Activated CD4-positive, alpha-beta memory T cell treated with anti-CD3 and anti-CD28 coated beads for 36 hours (primary cell): ENCODE measurements at regions of chr3 and their contacts with region 1.

Region 1: DNA sequence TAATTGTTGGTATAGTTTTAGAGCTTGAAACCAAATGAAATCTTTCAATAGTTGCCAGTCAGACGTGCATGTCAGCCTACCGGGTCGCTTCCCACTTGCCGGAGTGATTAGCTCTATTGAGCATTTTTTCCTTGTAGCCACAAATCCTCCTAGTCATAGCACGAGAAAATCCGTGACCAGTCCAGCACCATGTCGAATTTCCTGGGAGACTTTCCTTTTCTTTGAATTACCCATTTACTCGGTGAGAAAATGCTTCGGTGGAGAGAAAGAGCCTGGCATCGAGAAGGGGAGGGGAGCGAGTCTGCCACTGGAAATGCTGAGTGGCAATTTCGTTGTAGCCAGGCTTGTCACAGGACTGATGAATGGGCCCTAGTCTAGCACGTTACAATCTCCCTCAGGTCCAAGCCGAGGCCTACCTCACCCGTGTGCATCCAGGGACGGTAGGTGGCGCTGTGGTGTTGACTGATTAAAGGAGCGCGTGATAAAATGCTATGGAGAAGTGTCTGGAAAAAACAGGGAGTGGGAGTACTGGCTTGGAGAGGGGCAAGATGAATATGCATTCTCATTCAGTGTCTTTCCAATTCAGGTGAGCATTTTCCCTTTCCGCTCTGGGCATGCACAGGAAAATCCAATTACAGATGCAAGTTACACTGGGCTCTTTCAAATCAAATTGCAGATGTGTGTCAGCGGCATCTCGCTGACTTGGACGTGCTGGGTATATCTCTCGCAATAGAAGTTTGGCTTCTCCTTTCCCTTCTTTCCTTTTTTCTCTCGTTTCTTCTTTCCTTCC is 238.8 kb downstream of the EDEM1 start:
- DNase-seq: peak; percentile 80
- H3K4me3 Mint-ChIP-seq: no peak overlapping the region
- H3K27ac Mint-ChIP-seq: no peak overlapping the region
- H3K4me1 Mint-ChIP-seq: peaks cover 10% of the 10 kb centered on the region
- H3K27me3 Mint-ChIP-seq: peaks cover 1% of the 10 kb centered on the region

Region 2: DNA sequence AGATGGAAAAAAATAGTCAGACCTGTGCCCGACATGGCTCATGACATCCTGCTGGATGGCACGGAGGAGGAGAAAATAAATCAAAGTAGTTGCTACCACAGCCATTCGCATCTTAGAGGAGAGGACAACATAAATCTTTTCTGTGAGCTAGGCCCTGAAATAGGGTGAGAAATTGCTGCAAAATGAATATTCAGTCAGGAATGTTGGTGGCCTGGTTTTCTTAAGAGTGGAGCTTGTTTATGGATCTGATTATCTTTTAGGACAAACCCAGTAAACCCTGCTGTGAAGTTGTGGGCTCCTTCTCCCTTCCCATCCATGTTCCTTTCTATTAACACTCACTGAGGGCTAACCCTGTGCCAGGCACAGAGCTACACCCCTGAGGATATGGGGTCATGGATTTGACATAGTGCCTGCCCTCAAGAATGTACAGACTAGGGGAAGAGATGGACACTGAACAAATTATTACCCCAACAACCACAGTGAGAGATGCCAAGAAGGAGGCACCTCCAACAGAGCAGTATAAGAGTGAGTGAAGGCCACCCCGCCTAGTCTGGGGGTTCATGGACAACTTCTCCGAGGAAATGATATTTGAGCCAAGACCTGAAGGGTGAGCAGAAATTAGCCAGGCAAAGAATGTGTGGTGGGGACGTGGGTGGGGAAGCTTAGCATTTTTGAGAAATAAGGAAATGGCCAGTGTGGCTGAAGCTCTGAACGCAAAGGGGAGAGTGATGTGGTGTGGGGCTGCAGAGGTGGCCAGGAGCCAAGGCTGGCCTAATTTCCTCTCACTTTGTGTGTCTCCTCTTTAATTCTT is 373.1 kb before region 1 on chr3:
- CTCF ChIA-PET with region 1: no interaction called
- POLR2A ChIA-PET with region 1: no interaction called
- intact Hi-C with region 1: no loop called
- DNase-seq: no peak
- H3K4me3 Mint-ChIP-seq: no peak overlapping the region
- H3K27ac Mint-ChIP-seq: no peak overlapping the region
- H3K4me1 Mint-ChIP-seq: peaks cover 33% of the 10 kb centered on the region
- H3K27me3 Mint-ChIP-seq: peaks cover 1% of the 10 kb centered on the region

Region 3: DNA sequence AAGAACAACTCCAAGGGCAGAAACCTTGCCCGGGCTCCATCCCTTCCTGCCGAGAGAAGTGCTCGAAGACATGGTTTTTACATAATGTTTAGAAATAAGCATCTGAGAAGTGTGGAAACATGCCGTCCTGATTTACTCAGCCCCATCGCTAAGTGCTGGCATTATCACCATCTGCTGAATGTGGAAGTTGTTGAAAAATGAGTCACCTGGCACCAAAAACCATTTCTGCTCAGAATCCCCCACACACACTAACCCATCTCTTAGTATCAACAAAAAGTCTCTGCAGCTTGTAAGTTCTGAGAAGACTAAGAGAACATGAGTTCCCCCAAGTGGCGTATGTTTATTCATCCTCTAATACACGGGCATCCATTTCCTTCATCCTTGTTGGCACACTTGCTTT is 355.2 kb before region 1 on chr3:
- CTCF ChIA-PET with region 1: no interaction called
- POLR2A ChIA-PET with region 1: no interaction called
- intact Hi-C with region 1: no loop called
- DNase-seq: no peak
- H3K4me3 Mint-ChIP-seq: no peak overlapping the region
- H3K27ac Mint-ChIP-seq: no peak overlapping the region
- H3K4me1 Mint-ChIP-seq: no peaks in the 10 kb centered on the region
- H3K27me3 Mint-ChIP-seq: no peaks in the 10 kb centered on the region

Region 4: GRCh38 chr3:5226783-5227182 is 199.5 kb before region 1 on chr3:
- CTCF ChIA-PET with region 1: no interaction called
- POLR2A ChIA-PET with region 1: no interaction called
- intact Hi-C with region 1: loop called (anchors 5 kb)
- DNase-seq: no peak
- H3K4me3 Mint-ChIP-seq: no peak overlapping the region
- H3K27ac Mint-ChIP-seq: no peak overlapping the region
- H3K4me1 Mint-ChIP-seq: peaks cover 1% of the 10 kb centered on the region
- H3K27me3 Mint-ChIP-seq: no peaks in the 10 kb centered on the region

Region 5: DNA sequence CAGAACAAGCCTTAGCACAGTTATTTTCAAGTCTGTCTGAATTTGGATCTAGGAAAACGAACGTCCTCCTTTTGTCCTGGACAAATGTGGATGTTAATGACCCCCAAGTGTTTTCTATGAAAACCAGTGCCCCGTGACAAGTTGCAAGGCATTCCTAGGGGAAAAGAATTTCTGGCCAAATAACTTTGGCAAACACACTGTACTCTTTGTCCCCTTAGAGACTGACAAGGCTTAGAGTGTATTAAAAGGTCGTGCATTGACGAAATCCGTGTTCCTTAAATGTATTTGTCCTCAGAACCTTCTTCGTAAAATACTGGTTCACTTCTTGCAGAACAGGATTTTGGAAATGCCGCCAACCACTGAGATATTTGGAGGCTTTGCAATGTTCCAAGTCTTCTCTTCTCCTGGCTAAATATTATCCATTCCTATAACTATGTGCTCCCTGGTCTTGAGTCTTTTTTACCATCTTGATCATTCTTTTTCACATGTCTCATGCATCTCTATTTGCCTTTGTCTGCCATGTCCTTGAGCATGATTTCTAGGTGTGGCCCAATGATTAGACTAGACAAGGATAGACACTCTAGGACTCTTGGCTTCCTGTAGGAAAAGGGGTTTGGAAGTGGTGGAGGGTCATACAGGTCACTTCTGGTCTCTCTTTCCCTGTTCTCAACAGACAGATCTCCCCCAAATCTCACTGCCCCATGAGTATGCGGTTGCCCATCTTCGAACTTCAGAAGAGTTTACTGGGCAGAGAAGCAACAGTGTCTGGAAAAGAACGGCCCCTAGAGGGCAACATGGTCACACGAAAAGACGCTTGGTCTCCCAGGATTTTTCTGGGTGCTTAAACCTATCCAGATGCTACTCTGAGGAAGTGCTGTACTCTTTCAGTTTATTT is 121.3 kb before region 1 on chr3:
- CTCF ChIA-PET with region 1: interaction called, 3 read pairs
- POLR2A ChIA-PET with region 1: no interaction called
- intact Hi-C with region 1: loop called (anchors 5 kb)
- DNase-seq: peak; percentile 61
- H3K4me3 Mint-ChIP-seq: no peak overlapping the region
- H3K27ac Mint-ChIP-seq: no peak overlapping the region
- H3K4me1 Mint-ChIP-seq: no peaks in the 10 kb centered on the region
- H3K27me3 Mint-ChIP-seq: no peaks in the 10 kb centered on the region

Region 6: DNA sequence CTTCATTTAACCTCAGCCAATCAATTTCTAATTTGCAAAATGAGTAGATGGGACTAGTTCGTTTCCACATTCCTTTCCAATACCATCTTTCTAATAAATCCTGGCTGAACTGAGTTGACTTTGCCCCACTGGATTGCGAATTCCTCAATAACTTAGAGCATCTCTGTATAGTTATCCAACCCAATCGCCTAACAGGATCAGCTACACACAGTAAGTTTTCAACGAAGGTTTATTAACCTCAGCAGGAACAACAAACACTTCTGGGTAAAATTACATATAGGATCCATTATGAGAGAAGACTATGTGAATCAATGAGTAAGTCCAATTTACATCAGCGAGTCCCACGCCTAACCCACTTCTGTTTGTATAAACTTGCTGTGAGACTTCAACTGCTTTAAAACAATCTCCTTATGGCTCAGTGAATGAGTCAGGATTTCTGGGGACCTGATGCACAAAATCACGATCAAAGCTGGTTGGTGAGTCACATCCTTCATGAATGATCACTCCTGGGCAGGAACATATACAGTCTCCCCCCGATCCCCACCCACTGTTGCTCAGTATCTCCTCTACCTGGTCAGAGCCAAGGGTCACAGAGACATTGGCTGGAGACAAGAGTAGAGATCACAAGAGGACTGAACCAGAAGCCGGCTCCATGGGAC is 96.0 kb before region 1 on chr3:
- CTCF ChIA-PET with region 1: no interaction called
- POLR2A ChIA-PET with region 1: interaction called, 3 read pairs
- intact Hi-C with region 1: loop called (anchors 5 kb)
- DNase-seq: peak; percentile 65
- H3K4me3 Mint-ChIP-seq: peak overlapping the region; percentile 36
- H3K27ac Mint-ChIP-seq: peak overlapping the region; percentile 59
- H3K4me1 Mint-ChIP-seq: peaks cover 32% of the 10 kb centered on the region
- H3K27me3 Mint-ChIP-seq: peaks cover 3% of the 10 kb centered on the region

Region 7: GRCh38 chr3:5568458-5568857 is 142.2 kb after region 1 on chr3:
- CTCF ChIA-PET with region 1: no interaction called
- POLR2A ChIA-PET with region 1: no interaction called
- intact Hi-C with region 1: loop called (anchors 10 kb)
- DNase-seq: no peak
- H3K4me3 Mint-ChIP-seq: no peak overlapping the region
- H3K27ac Mint-ChIP-seq: no peak overlapping the region
- H3K4me1 Mint-ChIP-seq: no peaks in the 10 kb centered on the region
- H3K27me3 Mint-ChIP-seq: peaks cover 2% of the 10 kb centered on the region

Region 8: DNA sequence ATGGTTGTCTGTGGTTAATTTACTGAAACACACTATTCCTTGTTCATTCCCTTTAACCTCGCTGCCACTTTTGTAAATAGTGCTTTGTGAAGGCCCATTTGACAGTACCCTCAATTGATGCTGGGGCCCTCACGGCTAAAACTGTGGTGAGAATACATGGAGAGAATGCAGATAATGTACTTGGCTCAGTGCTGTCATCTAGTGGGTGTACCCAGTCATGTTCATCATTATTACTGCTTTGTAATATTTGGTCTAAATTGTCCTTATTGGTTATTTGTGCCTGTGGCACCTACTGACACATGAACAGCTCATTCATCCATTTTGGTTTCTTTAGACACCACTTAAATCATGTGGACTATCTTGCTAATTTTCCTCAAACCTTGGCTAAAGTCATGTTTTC is 304.8 kb after region 1 on chr3:
- CTCF ChIA-PET with region 1: no interaction called
- POLR2A ChIA-PET with region 1: no interaction called
- intact Hi-C with region 1: loop called (anchors 10 kb)
- DNase-seq: no peak
- H3K4me3 Mint-ChIP-seq: no peak overlapping the region
- H3K27ac Mint-ChIP-seq: no peak overlapping the region
- H3K4me1 Mint-ChIP-seq: no peaks in the 10 kb centered on the region
- H3K27me3 Mint-ChIP-seq: no peaks in the 10 kb centered on the region

Region 9: DNA sequence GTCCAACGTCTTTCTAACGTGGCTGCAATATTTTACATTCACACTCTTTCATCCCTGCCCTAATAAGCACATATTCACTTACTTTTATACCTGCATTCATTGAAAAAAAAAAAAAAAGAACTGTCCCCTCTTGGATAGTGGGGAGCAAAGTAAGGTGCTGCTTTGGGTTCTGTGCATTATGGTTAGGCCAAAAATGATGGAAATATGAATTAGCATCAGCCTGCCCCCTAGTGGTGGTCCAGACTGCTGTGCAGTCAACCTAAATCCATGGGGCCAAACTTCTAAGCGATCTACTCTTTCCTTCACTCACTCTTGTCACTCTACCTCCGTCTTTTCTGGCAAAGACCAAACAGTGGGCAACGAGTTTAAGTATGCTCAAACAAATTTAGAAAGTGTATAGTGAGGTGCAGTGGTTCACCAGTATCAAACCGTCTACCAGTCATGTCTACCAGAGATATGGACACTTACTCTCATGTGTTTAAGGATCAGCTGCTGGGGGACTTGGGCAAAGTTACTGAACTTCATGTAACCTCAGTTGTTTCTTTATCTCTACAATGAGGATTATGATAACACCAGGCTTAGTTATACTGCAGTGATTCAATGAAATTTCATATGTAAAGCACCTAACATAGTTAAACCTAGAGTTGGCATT is 1373.1 kb after region 1 on chr3:
- CTCF ChIA-PET with region 1: no interaction called
- POLR2A ChIA-PET with region 1: no interaction called
- intact Hi-C with region 1: loop called (anchors 2 kb)
- DNase-seq: peak; percentile 44
- H3K4me3 Mint-ChIP-seq: no peak overlapping the region
- H3K27ac Mint-ChIP-seq: no peak overlapping the region
- H3K4me1 Mint-ChIP-seq: no peaks in the 10 kb centered on the region
- H3K27me3 Mint-ChIP-seq: no peaks in the 10 kb centered on the region